Cardiac septum (tissue), 1 donor: ENCODE measurements at regions of chr16 and their contacts with region 1.

Region 1: GRCh38 chr16:67428146-67428731 is 2.7 kb upstream of the HSD11B2 start:
- DNase-seq: peak; percentile 82

Region 2: DNA sequence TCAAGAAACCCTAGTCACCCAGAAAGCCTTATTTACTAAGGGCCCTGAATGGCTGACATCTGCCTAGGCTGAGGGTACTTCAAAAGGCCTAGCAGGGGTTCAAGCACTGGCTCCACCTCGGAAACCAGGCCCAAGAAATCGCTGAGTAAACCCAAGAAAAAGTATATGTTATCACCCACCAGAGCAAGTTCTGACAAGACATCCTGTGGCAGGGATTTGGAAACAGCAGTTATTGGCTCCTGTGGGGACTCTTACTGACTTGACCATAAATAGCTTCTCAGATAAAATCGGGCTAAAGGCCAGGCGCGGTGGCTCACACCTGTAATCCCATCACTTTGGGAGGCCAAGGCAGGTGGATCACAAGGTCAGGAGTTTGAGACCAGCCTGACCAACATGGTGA is 40.5 kb after region 1 on chr16:
- intact Hi-C with region 1: loop called (anchors 5 kb)
- DNase-seq: no peak